ENCODE measurements at regions of chr13 and their contacts with region 1.

Region 1: DNA sequence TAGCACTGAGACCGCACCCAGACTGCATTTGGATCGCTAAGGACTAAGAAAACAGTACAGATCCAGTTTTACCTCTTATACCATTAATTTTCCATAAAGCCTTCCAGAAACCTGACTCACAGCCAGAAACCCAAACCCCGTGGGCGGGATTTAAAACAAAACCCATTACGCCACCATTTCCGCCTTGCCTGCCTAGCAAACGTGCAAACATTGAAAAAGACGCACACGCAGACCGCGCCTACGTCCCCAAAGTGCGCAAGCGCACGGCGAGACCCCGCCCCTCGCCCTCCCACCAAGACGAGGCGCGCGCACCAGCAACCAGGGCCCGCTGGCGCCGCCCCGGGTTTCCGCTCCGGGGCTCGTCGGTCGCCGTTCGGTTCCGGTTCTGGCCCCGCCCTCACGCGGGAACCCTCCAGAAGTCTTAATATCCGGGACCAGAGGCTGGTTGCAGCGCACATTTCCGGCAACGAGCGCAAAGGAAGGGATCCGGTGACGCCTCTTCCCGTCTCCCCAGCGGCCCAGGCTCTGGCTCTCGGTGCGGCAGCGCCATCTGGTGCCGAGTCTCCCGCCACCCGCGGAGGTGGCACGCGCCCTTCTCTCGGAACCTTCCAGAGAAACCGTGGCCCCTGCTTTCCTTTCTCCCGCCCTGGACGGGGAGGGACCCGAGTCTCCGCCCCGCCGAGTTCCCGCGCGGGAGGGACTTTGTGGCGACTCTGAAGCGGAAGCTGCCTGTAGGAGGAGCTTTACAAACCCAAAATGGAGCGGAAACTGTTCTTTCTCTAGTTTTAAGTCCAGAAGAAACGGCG is 256.9 kb upstream of the STARD13 start:
- DNase-seq: peak; percentile 99
- ATAC-seq: peak; percentile 86
- H3K4me3 Mint-ChIP-seq: peak overlapping the region; percentile 82
- H3K27ac Mint-ChIP-seq: peak overlapping the region; percentile 99
- H3K4me1 Mint-ChIP-seq: peaks cover 55% of the 10 kb centered on the region
- H3K27me3 Mint-ChIP-seq: no peaks in the 10 kb centered on the region

Region 2: GRCh38 chr13:32315238-32316027 is 1227.1 kb before region 1 on chr13 and contains the starts of genes BRCA2 and ZAR1L:
- CTCF ChIA-PET with region 1: no interaction called
- POLR2A ChIA-PET with region 1: no interaction called
- intact Hi-C with region 1: loop called (anchors 1 to 5 kb)
- DNase-seq: peak; percentile 94
- ATAC-seq: peak; percentile 95
- H3K4me3 Mint-ChIP-seq: peak within 1 kb of the TSS; percentile 92
- H3K27ac Mint-ChIP-seq: peak within 1 kb of the TSS; percentile 100
- H3K4me1 Mint-ChIP-seq: peaks cover 9% of the 10 kb centered on the region
- H3K27me3 Mint-ChIP-seq: no peaks in the 10 kb centered on the region
- total RNA-seq, gene BRCA2: 34.1 to 49.0 TPM
- total RNA-seq, gene ZAR1L: not detected

Region 3: GRCh38 chr13:32650705-32651311 is 891.7 kb before region 1 on chr13:
- CTCF ChIA-PET with region 1: no interaction called
- POLR2A ChIA-PET with region 1: no interaction called
- intact Hi-C with region 1: loop called in 1 of 2 experiments (anchors 1 kb)
- DNase-seq: peak; percentile 80
- ATAC-seq: peak; percentile 90
- H3K4me3 Mint-ChIP-seq: no peak overlapping the region
- H3K27ac Mint-ChIP-seq: peak overlapping the region; percentile 72
- H3K4me1 Mint-ChIP-seq: peaks cover 47% of the 10 kb centered on the region
- H3K27me3 Mint-ChIP-seq: no peaks in the 10 kb centered on the region

Region 4: DNA sequence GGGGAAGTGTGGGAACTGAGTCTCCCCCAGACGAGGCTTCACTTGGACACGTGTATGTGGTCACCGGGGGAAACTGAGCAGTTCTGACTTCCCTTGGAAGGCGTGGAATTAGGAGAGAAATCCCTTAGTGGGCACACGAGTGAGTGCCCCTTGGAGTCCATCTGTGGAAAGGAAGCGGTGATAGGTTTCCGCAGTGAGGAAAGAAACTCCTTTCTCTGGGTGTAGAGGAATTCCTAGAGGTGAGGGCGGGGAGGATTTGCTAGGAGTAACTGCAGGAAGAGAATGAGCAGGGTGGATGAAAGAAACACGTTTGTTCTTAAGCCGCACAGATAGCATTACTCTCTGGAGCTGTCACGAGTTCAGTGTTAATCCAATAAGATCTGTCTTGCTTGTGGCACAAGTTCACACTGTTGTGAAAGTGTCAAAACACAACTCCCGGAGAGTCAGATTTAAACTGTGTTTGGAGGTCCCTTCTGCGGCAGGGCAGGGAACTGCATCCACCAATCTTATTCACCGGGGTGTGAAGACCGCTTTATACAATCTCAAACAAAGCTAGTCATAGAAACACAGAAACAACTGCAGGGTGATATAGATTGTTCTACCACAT is 525.1 kb before region 1 on chr13:
- CTCF ChIA-PET with region 1: no interaction called
- POLR2A ChIA-PET with region 1: no interaction called
- intact Hi-C with region 1: loop called in 1 of 2 experiments (anchors 1 kb)
- DNase-seq: peak; percentile 74
- ATAC-seq: peak; percentile 98
- H3K4me3 Mint-ChIP-seq: peak overlapping the region; percentile 52
- H3K27ac Mint-ChIP-seq: no peak overlapping the region
- H3K4me1 Mint-ChIP-seq: peaks cover 9% of the 10 kb centered on the region
- H3K27me3 Mint-ChIP-seq: peaks cover 56% of the 10 kb centered on the region

Region 5: DNA sequence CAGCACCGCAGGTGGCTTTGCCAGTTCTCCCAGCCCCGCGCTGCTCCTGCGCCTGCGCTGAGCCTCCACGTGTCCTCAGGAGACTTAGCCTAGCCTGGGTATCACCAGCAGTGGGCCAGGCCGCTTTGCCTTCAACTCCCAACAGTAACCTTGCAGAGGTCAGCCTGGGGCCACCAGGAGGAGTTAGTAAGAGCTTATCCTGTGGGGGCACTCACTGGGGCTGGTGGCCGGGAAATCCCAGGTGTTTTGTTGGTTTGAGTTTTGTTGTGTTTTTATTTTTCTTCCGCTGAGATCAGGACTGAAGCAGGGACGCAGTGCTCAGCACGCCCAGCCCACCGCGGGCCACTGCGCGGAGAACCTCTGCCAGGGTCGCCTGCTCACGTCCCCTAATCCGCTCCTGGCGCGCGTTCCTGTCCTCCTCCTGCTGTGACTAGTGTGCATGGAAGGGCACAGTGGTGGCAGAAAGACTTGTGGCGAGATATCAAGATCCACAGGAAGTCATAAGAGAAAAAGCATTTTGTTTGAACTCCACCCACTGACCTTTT is 68.1 kb after region 1 on chr13:
- CTCF ChIA-PET with region 1: interaction called, 3 read pairs
- POLR2A ChIA-PET with region 1: interaction called, 3 read pairs
- intact Hi-C with region 1: loop called (anchors 1 to 2 kb)
- DNase-seq: peak; percentile 77
- ATAC-seq: peak; percentile 54
- H3K4me3 Mint-ChIP-seq: peak overlapping the region; percentile 69
- H3K27ac Mint-ChIP-seq: peak overlapping the region; percentile 98
- H3K4me1 Mint-ChIP-seq: peaks cover 50% of the 10 kb centered on the region
- H3K27me3 Mint-ChIP-seq: peaks cover 2% of the 10 kb centered on the region

Region 6: DNA sequence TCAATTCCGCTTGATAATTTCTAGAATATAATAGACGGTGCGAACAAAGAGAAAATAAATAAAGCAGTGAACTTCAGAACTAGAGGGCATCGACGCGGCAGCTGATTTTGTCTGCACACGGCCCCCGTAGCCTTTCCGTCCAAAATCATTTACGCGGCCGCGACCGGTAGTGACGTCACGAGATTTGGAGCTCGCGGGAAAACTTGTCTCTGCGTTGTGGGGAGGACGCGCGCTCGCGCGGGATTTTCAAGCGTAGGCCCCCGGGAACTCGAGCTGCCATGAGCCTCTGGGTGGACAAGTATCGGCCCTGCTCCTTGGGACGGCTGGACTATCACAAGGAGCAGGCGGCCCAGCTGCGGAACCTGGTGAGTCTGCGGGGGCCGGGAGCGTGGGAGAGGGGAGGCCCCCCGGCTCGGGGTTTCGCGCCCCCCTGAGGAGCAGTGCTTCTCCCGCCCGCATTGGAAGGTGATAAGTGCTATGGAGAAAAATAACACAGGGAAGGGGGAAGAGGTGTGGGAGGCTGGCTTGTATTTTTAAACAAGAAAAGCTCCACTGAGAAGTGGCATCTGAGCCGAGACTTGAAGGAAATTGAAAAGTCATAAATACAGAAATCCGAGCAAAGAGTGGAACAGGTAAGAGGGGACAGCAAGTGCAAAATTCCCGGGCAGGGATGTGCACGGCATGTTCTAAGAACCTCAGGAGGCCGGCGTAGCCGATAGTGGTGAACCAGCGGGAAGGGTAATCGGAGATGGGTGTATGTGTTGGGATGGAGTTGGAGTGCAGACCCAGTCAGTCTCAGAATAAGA is 275.6 kb after region 1 on chr13 and contains the start of gene RFC3:
- CTCF ChIA-PET with region 1: no interaction called
- POLR2A ChIA-PET with region 1: interaction called, 7 read pairs
- intact Hi-C with region 1: loop called (anchors 1 to 2 kb)
- DNase-seq: peak; percentile 96
- ATAC-seq: peak; percentile 97
- H3K4me3 Mint-ChIP-seq: peak within 1 kb of the TSS; percentile 96
- H3K27ac Mint-ChIP-seq: peak within 1 kb of the TSS; percentile 97
- H3K4me1 Mint-ChIP-seq: peaks cover 29% of the 10 kb centered on the region
- H3K27me3 Mint-ChIP-seq: no peaks in the 10 kb centered on the region
- total RNA-seq, gene RFC3: 64.6 to 66.4 TPM